Ascending aorta (tissue), 2 donors: ENCODE measurements at regions of chr3 and their contacts with region 1.

Region 1: GRCh38 chr3:186930641-186931531 is 560 bp downstream of the ST6GAL1 start:
- DNase-seq: peak; percentile 24 to 81
- H3K4me3 ChIP-seq: peak overlapping the region; percentile 66 to 94
- H3K27ac ChIP-seq: peak overlapping the region; percentile 82 to 91
- H3K4me1 ChIP-seq: peaks cover 0 to 19% of the 10 kb centered on the region in 2 donors
- H3K27me3 ChIP-seq: no peaks in the 10 kb centered on the region
- CTCF ChIP-seq: peak in 1 of 3 experiments; percentile 26

Region 2: GRCh38 chr3:185937689-185938463 is 993.0 kb before region 1 on chr3 and contains the start of gene TRA2B:
- intact Hi-C with region 1: loop called (anchors 10 kb)
- DNase-seq: peak; percentile 97 to 99
- H3K4me3 ChIP-seq: peak within 1 kb of the TSS; percentile 99
- H3K27ac ChIP-seq: peak within 1 kb of the TSS; percentile 100
- H3K4me1 ChIP-seq: peaks cover 3 to 8% of the 10 kb centered on the region in 2 donors
- H3K27me3 ChIP-seq: no peaks in the 10 kb centered on the region
- CTCF ChIP-seq: peak in 2 of 3 experiments; percentile 39 to 40
- total RNA-seq, gene TRA2B: 138 TPM

Region 3: GRCh38 chr3:186514296-186515002 is 416.4 kb before region 1 on chr3:
- intact Hi-C with region 1: no loop called
- DNase-seq: no peak
- H3K4me3 ChIP-seq: no peak overlapping the region
- H3K27ac ChIP-seq: no peak overlapping the region
- H3K4me1 ChIP-seq: no peaks in the 10 kb centered on the region
- H3K27me3 ChIP-seq: no peaks in the 10 kb centered on the region
- CTCF ChIP-seq: peak in 1 of 3 experiments; percentile 24

Region 4: DNA sequence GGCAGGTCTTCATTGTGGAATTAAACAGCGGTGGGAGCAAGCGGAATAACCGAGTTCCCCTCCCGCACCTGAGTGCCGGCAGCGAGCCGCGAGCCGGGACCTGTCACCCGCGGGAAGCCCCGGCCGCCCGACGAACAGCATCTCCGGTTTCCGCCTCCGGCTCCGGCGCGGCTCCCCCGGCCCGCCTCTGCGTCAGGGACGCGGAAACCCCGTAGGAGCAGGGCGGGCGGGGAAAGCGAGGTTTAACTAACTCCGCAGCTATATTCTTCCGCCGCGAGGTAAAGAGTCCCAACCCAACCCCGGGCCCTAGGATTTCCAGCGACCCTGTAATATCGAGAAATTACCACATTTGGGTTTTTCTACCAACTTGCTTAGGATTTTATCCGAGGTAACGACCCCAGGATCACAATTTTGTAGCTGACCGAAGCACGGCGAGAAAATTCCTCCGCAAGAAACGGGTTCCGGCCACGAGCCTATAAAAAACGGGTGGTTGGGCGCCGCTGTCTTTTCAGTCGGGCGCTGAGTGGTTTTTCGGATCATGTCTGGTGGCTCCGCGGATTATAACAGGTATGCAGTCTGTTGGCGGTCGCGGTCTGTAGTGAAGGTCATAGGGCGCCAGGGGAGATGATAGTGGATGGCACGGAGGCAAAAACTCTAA is 147.7 kb before region 1 on chr3 and contains the start of gene EIF4A2:
- intact Hi-C with region 1: loop called (anchors 2 kb)
- DNase-seq: peak; percentile 60 to 94
- H3K4me3 ChIP-seq: peak within 1 kb of the TSS; percentile 88 to 94
- H3K27ac ChIP-seq: peak within 1 kb of the TSS; percentile 98
- H3K4me1 ChIP-seq: peaks cover 10 to 30% of the 10 kb centered on the region in 2 donors
- H3K27me3 ChIP-seq: no peaks in the 10 kb centered on the region
- CTCF ChIP-seq: no peak
- total RNA-seq, gene EIF4A2: 260 TPM

Region 5: DNA sequence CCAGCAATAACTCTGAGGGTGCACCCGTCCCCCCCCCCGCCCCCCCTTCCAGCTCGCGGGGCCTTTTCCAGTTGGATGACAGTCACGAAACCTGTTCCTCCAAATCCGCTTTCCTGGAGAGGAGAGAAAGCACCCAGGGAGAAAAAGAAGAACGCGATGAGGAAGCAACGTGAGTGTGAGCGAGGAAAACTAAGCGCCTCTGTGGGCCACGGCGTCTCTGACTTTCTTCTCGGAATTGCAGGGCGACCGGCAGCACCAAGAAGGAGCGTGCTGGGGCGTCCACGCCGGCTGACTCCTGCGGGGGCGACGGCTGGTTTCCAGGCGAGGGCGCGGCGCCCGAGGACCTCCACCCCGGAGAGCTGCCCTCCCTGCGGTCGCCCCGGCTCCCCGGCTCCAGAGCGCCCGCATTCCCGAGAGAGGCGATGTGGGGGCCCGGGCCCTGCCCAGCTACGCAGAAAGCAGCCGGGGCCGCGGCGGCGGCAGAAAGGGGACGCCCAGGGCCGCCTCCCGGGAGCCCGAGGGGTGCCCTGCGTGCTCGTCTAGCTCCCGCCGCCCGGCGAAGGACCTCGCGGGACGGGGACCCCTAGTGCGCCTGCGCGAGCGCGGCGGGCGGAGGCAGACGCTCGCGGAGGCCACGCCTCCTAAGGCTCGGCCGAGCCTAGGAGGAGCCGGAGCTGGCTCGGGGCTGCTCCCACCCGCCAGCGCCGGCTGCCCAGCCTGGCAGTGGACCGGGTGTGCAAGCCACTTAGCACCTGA is 103.7 kb before region 1 on chr3:
- intact Hi-C with region 1: no loop called
- DNase-seq: peak in 1 of 2 donors; percentile 88
- H3K4me3 ChIP-seq: peak overlapping the region; percentile 62 to 86
- H3K27ac ChIP-seq: peak overlapping the region; percentile 57 to 62
- H3K4me1 ChIP-seq: peaks cover 3 to 5% of the 10 kb centered on the region in 2 donors
- H3K27me3 ChIP-seq: peaks cover 7% of the 10 kb centered on the region
- CTCF ChIP-seq: no peak

Region 6: GRCh38 chr3:186849374-186849975 is 81.4 kb before region 1 on chr3:
- intact Hi-C with region 1: loop called (anchors 5 kb)
- DNase-seq: no peak
- H3K4me3 ChIP-seq: no peak overlapping the region
- H3K27ac ChIP-seq: no peak overlapping the region
- H3K4me1 ChIP-seq: no peaks in the 10 kb centered on the region
- H3K27me3 ChIP-seq: no peaks in the 10 kb centered on the region
- CTCF ChIP-seq: peak; percentile 34 to 59 (median 37)

Region 7: GRCh38 chr3:187101184-187102072 is 170.5 kb after region 1 on chr3:
- intact Hi-C with region 1: loop called (anchors 2 kb)
- DNase-seq: peak; percentile 21 to 89
- H3K4me3 ChIP-seq: peak overlapping the region; percentile 44 to 55
- H3K27ac ChIP-seq: peak overlapping the region; percentile 82 to 90
- H3K4me1 ChIP-seq: peaks cover 12 to 34% of the 10 kb centered on the region in 2 donors
- H3K27me3 ChIP-seq: no peaks in the 10 kb centered on the region
- CTCF ChIP-seq: no peak